CD4-positive, alpha-beta memory T cell (primary cell): ENCODE measurements at regions of chr2 and their contacts with region 1.

Region 1: DNA sequence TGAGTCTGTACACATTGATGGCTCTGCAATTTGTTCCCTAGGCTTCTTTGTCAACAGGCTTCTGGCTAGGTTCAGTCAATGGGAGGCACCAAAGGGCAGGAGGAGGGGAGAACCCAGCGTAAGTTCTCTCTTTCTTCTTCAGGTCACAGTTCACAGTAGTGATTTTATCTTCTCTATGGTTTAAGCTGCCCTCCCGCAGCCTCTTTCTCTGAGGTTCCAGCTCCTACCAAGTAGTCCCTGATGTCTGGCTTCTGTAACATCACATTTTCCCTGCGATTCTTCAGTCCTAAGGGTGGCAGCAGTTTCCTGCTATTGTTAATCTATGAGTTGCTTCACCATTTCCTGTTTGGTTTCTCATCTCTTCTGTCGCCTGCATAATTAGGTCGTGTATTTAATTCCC is 107.4 kb downstream of the CPO start:
- DNase-seq: peak; percentile 37 to 62 (median 45)
- H3K4me3 ChIP-seq: no peak overlapping the region
- H3K4me3 Mint-ChIP-seq: peak overlapping the region in 7 of 8 donors; percentile 0 to 55 (median 23)
- H3K27ac ChIP-seq: no peak overlapping the region
- H3K27ac Mint-ChIP-seq: peak overlapping the region in 6 of 7 donors; percentile 10 to 84 (median 52)
- H3K4me1 ChIP-seq: peaks cover 9% of the 10 kb centered on the region
- H3K4me1 Mint-ChIP-seq: peaks cover 11 to 15% (median 13%) of the 10 kb centered on the region in 4 donors
- H3K27me3 ChIP-seq: no peaks in the 10 kb centered on the region
- H3K27me3 Mint-ChIP-seq: peaks cover 0 to 2% of the 10 kb centered on the region in 2 donors

Region 2: DNA sequence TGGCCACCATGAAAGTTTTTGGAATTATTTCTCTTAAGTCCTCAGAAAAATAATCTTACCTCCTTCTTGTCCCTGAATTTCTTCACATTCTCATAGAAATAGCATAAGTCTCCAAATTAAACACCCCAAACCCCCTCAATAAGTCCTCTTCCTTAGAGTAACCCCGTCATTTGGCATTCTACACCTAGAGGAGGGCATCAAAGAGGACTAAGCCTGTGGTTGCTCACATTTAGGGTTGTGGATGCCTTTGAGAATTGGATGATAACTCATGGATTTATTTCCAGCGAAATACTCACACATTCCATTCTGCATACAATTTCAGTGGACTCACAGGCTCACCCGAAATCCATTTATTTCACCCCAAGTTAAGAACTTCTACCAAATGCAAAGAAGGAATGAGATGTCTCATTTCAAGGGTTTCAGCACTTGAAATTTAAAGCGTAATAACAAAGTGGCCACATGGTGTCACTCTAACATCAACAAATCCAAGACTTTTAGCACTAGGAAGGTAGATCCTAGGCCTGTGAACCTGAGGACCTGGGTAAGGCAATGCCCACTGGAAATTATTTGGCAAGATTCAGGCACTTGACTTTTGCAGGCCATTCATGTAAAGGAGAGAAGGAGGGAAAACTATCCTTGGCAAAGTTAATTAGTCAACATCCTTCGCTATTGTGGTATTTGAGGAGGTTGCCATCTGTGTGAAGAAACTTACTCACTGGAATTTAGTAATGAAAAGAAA is 353.2 kb before region 1 on chr2:
- CTCF ChIA-PET with region 1: no interaction called
- POLR2A ChIA-PET with region 1: no interaction called
- intact Hi-C with region 1: loop called (anchors 2 kb)
- DNase-seq: peak in 4 of 5 donors; percentile 40 to 54 (median 50)
- H3K4me3 ChIP-seq: no peak overlapping the region
- H3K4me3 Mint-ChIP-seq: no peak overlapping the region
- H3K27ac ChIP-seq: no peak overlapping the region
- H3K27ac Mint-ChIP-seq: no peak overlapping the region
- H3K4me1 ChIP-seq: peaks cover 10% of the 10 kb centered on the region
- H3K4me1 Mint-ChIP-seq: peaks cover 0 to 4% (median 4%) of the 10 kb centered on the region in 4 donors
- H3K27me3 ChIP-seq: no peaks in the 10 kb centered on the region
- H3K27me3 Mint-ChIP-seq: peaks cover 2 to 5% of the 10 kb centered on the region in 2 donors

Region 3: DNA sequence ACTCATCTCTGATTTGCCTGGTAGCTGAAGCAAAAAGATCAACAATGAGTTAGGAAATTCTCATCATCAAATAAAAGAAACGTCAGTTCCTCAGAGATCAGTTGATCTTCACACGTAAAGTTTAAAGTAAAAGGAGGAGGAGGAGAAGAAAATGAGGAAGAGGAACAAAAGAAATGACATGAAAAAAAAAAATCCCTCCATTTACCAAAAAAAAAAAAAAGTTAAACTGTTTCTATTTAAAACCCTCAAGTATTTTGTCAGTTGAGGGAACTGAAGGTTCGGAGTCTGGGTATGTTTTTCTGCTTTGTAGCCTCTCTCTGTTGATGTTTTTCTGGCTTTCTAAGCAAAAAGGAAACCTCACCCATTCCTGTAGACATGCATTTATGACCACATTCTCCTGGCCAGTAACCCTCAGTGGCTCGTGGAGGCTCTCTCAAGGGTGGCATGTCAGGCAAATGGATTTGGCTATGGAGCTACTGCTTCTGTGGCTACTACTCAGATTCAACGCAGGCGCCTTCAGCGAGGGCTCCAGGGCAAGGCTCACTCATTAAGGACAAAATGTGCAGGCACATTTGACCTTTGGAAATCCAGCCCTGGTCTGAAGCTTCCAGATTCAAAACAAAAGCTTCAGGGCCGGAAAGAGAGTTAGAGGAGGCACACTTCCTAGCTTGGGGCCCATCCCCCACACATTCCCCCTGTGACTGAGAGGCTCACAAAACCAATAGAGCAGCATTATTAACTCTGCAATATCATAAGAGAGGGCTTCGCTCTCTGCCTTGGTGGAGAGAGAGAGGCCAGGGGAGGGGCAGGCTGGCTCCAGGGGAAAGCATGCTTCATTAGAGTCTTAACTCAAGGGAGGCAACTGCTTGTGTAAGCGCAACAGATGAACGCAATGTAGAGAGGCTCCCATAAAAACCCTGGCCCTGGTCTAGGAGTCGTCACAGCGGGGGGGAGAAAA is 96.8 kb after region 1 on chr2:
- CTCF ChIA-PET with region 1: interaction called, 11 read pairs
- POLR2A ChIA-PET with region 1: interaction called, 11 read pairs
- intact Hi-C with region 1: loop called (anchors 2 kb)
- DNase-seq: peak; percentile 74 to 85 (median 77)
- H3K4me3 ChIP-seq: peak overlapping the region in 1 of 2 donors; percentile 15
- H3K4me3 Mint-ChIP-seq: peak overlapping the region; percentile 66 to 84 (median 74)
- H3K27ac ChIP-seq: peak overlapping the region; percentile 69
- H3K27ac Mint-ChIP-seq: peak overlapping the region; percentile 84 to 96 (median 93)
- H3K4me1 ChIP-seq: peaks cover 58% of the 10 kb centered on the region
- H3K4me1 Mint-ChIP-seq: peaks cover 48 to 81% (median 67%) of the 10 kb centered on the region in 4 donors
- H3K27me3 ChIP-seq: no peaks in the 10 kb centered on the region
- H3K27me3 Mint-ChIP-seq: no peaks in the 10 kb centered on the region

Region 4: DNA sequence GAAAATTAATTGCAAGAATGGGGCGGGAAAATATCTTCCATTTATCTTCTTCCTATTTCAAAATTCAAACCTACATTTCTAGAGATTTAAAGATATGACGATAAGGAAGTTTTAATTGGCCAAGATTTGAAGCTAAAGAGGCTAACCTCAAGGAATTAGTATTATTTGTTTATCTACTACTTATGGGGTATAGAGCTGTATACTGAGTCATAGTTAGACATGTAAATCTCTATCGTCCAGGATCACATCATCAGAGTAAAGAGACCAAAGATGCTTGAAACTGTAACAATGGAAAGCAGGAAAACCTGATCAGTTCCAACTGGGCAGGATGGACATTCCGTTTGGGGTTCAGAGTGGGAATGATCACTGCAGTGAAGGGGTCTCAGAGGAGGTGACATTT is 214.2 kb after region 1 on chr2:
- CTCF ChIA-PET with region 1: interaction called, 3 read pairs
- POLR2A ChIA-PET with region 1: no interaction called
- intact Hi-C with region 1: loop called (anchors 2 kb)
- DNase-seq: no peak
- H3K4me3 ChIP-seq: no peak overlapping the region
- H3K4me3 Mint-ChIP-seq: no peak overlapping the region
- H3K27ac ChIP-seq: no peak overlapping the region
- H3K27ac Mint-ChIP-seq: no peak overlapping the region
- H3K4me1 ChIP-seq: no peaks in the 10 kb centered on the region
- H3K4me1 Mint-ChIP-seq: no peaks in the 10 kb centered on the region
- H3K27me3 ChIP-seq: no peaks in the 10 kb centered on the region
- H3K27me3 Mint-ChIP-seq: no peaks in the 10 kb centered on the region

Region 5: DNA sequence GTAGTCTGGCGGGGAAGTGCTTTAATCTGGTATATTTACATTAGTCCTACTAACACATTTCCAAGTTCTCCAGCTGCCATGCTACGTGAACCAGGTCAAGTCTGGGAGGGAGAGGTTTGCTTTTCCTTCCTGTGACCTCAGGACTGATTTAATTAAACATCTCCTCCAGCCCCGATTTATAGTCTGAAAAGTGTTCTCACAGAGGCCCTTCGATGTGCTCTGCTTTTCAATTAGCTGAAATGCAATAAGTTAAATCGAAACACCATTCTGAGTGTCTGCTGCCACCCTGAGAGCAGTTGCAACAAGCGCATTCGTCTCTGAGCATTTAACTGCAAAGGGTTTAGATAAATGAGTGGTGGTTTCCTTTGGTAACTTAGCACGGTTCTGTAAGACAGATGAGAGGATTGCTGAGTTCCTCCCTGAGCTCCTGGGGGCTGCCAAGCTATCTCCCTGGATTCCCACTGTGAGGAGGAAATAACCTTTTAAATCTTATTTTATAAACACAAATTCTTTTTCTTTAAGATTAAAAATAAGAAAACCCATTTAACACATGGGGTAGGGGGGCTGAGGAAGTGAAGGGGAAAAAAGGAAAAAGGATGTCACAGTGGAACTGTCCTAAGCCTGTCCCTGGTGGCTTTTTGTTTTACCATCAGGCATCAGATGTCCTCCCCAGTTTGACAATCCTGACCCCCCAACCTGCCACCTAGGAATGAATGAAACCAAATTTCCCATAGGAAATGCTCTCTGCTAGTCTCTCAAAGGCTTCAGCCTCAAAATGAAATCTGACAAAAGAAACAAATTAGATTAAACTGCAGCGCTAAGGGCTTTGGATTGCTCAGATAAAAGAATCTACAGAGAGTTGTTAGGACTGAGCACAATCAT is 426.6 kb after region 1 on chr2:
- CTCF ChIA-PET with region 1: interaction called, 41 read pairs
- POLR2A ChIA-PET with region 1: no interaction called
- intact Hi-C with region 1: loop called (anchors 1 kb)
- DNase-seq: peak; percentile 22 to 39 (median 38)
- H3K4me3 ChIP-seq: no peak overlapping the region
- H3K4me3 Mint-ChIP-seq: no peak overlapping the region
- H3K27ac ChIP-seq: no peak overlapping the region
- H3K27ac Mint-ChIP-seq: peak overlapping the region in 1 of 7 donors; percentile 32
- H3K4me1 ChIP-seq: peaks cover 6% of the 10 kb centered on the region
- H3K4me1 Mint-ChIP-seq: peaks cover 4 to 11% (median 9%) of the 10 kb centered on the region in 4 donors
- H3K27me3 ChIP-seq: no peaks in the 10 kb centered on the region
- H3K27me3 Mint-ChIP-seq: no peaks in the 10 kb centered on the region